ENCODE measurements at regions of chr7 and their contacts with region 1.

Region 1: GRCh38 chr7:2757904-2758672 is 70.1 kb downstream of the AMZ1 start:
- DNase-seq: peak; percentile 58
- H3K4me3 Mint-ChIP-seq: peak overlapping the region; percentile 49
- H3K27ac Mint-ChIP-seq: peak overlapping the region; percentile 84
- H3K4me1 Mint-ChIP-seq: peaks cover 53% of the 10 kb centered on the region
- H3K27me3 Mint-ChIP-seq: no peaks in the 10 kb centered on the region
- CTCF ChIP-seq: no peak

Region 2: GRCh38 chr7:2821161-2821841 is 63.2 kb after region 1 on chr7:
- CTCF ChIA-PET with region 1: interaction called, 13 read pairs
- intact Hi-C with region 1: loop called (anchors 5 kb)
- DNase-seq: peak; percentile 62
- H3K4me3 Mint-ChIP-seq: peak overlapping the region; percentile 51
- H3K27ac Mint-ChIP-seq: peak overlapping the region; percentile 84
- H3K4me1 Mint-ChIP-seq: peaks cover 56% of the 10 kb centered on the region
- H3K27me3 Mint-ChIP-seq: no peaks in the 10 kb centered on the region
- CTCF ChIP-seq: peak; percentile 18